ENCODE measurements at regions of chr2 and their contacts with region 1.

Region 1: GRCh38 chr2:101341901-101342624 is 33.6 kb upstream of the RNF149 start:
- DNase-seq: peak; percentile 29
- H3K4me3 ChIP-seq: no peak overlapping the region
- H3K27ac ChIP-seq: no peak overlapping the region
- H3K27me3 ChIP-seq: no peaks in the 10 kb centered on the region
- CTCF ChIP-seq: peak; percentile 87

Region 2: DNA sequence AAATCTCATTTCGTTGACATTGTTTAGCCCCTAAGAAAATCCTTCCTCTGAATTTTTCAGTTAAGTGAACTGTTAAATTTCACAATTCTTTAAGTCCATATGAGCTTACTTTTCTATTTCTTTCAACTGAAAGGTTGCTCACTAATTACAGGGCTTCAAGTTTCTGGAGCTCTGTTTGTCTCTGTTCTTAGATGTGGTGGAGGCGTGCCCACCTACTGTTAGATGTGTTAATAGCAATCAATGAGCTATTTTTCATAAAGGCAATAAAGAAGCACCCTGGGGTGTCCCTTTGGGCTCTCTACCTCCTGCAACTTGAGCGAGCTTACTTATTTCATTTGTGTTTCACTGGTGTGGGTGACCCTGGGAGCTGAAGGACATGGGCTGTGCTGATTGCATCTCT is 20.3 kb after region 1 on chr2:
- CTCF ChIA-PET with region 1: interaction called, 14 read pairs
- POLR2A ChIA-PET with region 1: no interaction called
- DNase-seq: no peak
- H3K4me3 ChIP-seq: no peak overlapping the region
- H3K27ac ChIP-seq: no peak overlapping the region
- H3K27me3 ChIP-seq: peaks cover 27% of the 10 kb centered on the region
- CTCF ChIP-seq: no peak

Region 3: DNA sequence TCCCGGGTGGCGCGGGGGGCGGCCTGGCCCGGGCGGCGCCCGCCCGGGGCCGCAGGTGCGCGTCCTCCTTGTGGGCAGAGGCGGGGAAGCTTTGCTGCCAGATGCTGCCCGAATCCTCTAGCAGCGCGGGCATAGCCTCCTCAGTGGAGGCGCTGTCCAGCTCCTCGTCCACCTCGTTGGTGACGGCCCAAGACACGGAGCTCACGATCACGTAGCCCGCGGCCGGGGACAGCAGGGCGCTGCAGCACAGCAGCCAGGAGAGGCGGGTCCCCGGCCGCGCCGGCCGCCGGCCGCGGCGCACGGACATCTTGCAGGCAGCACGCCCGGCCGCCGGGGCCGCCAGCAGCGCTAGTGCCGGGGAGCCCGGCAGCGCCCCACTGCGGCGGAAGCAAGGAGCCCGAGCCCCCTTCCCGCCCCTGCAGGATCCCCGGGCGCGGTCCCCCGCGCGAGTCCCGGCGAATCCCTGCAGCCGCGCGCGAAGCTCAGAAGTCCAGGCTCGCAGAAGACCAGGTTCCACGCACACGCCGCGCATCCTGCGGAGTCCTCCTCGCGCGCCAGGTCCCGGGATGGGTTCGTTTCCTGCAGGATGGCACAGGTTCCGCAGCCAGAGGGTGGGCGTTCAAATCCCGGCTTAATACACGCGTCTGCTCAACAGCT is 45.2 kb after region 1 on chr2 and contains the start of gene CREG2:
- CTCF ChIA-PET with region 1: interaction called, 17 read pairs
- POLR2A ChIA-PET with region 1: interaction called, 7 read pairs
- DNase-seq: no peak
- H3K4me3 ChIP-seq: peak within 1 kb of the TSS; percentile 65
- H3K27ac ChIP-seq: no peak within 1 kb of the TSS
- H3K27me3 ChIP-seq: peaks cover 25% of the 10 kb centered on the region
- CTCF ChIP-seq: peak; percentile 52
- polyA plus RNA-seq, gene CREG2: not detected in 2 replicates

Region 4: DNA sequence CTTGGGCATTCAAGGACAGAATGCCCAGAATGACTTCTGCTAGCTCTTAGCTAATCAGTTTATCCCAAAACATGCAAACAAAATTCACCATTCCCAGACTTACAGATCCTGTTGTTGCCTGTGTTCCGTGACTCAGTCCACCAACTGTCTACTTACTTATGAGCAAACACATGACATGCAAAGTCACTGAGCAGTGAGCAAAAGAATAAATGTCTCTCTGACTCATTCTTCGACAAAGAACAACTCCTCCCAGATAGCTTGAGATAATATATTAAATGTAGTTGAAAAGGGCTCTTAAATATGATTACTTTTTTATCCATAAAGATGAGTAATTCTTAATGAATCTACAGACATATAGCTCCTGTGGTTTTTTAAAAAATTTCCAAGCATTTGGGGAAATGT is 54.3 kb after region 1 on chr2:
- CTCF ChIA-PET with region 1: interaction called, 10 read pairs
- POLR2A ChIA-PET with region 1: no interaction called
- DNase-seq: peak; percentile 69
- H3K4me3 ChIP-seq: no peak overlapping the region; the same call in 1 of the 2 replicates
- H3K27ac ChIP-seq: peak overlapping the region; percentile 83
- H3K27me3 ChIP-seq: no peaks in the 10 kb centered on the region
- CTCF ChIP-seq: no peak

Region 5: GRCh38 chr2:101823347-101823791 is 481.3 kb after region 1 on chr2:
- CTCF ChIA-PET with region 1: interaction called, 12 read pairs
- POLR2A ChIA-PET with region 1: no interaction called
- DNase-seq: peak; percentile 32
- H3K4me3 ChIP-seq: no peak overlapping the region
- H3K27ac ChIP-seq: no peak overlapping the region
- H3K27me3 ChIP-seq: no peaks in the 10 kb centered on the region
- CTCF ChIP-seq: peak; percentile 66